IMR-90 (cell line): ENCODE measurements at regions of chr2 and their contacts with region 1.

Region 1: DNA sequence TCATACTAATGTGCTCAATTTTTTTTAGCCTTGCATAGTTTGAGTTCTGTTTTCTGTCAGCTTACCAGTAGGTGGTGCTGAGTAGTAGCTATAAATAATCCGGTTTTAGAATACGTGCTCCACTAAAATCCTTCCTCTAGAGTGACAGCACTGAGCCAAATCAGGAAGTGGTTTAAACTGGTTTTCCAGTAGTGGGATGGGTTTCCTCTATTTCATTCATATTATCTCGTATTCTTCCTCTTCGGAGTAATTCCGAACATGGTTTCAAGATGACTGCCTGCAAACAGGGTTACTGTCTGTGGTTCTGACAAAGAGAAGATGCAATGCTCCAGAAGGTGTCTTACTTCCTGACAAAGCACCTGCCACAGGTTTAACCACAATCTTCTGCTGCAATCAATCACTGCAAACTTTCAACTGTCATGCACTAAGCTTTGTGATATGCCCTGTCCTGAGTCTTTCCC is 496.9 kb upstream of the VRK2 start:
- DNase-seq: no peak
- ATAC-seq: no peak
- H3K4me3 ChIP-seq: no peak overlapping the region
- H3K27ac ChIP-seq: no peak overlapping the region
- H3K4me1 ChIP-seq: no peaks in the 10 kb centered on the region
- H3K27me3 ChIP-seq: no peaks in the 10 kb centered on the region
- CTCF ChIP-seq: 0 out of 2 replicates have a peak, but pooled peaks have one; percentile 9
- POLR2A ChIP-seq: no peak
- RAD21 ChIP-seq: no peak

Region 2: GRCh38 chr2:57701391-57701815 is 151.7 kb after region 1 on chr2:
- CTCF ChIA-PET with region 1: no interaction called
- POLR2A ChIA-PET with region 1: no interaction called
- dilution Hi-C with region 1: no loop called
- in situ Hi-C with region 1: no loop called
- intact Hi-C with region 1: loop called (anchors 1 kb)
- DNase-seq: peak; percentile 0
- ATAC-seq: peak; percentile 75
- H3K4me3 ChIP-seq: no peak overlapping the region
- H3K27ac ChIP-seq: no peak overlapping the region
- H3K4me1 ChIP-seq: no peaks in the 10 kb centered on the region
- H3K27me3 ChIP-seq: no peaks in the 10 kb centered on the region
- CTCF ChIP-seq: no peak
- POLR2A ChIP-seq: no peak
- RAD21 ChIP-seq: no peak

Region 3: DNA sequence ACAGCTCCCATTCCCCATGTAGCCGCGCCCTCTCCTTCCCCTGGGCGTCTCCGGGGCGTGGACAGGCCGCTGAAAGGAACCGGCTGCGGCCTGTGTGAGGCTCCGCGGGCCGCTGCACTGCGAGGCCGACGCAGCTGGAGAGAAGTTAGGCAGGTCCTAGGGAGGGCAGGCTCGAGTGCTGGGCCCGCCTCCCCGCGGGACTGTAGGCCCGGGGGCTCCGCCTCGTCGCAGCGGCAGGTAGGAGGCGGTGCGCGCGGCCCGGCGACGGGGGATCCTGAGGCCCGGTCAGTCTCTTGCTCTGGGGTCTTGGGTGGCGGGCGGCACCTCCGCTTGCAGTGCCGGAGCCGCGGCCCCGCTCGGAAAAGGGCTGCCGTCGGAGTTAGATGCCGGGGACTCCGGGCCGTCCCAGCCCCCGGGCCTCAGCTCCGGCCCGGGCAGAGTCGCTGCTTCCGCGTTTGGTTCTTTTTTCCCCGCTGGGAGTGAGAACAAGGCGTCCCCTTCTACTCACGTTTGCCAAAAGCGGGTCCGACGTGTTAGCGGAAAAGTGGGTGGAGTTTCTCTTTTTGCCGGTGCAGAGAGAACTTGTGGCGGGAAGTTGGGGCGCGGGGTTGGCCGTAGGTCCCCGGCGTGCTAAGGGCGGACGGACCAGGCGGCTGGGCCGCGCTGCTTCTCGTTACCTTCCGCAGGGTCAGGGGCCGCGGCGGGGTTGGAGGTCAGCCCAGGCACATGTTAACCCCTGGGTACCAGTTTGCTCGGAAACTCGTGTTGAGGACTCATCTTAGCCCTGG is 497.1 kb after region 1 on chr2 and contains the start of gene VRK2:
- CTCF ChIA-PET with region 1: no interaction called
- POLR2A ChIA-PET with region 1: no interaction called
- dilution Hi-C with region 1: no loop called
- in situ Hi-C with region 1: no loop called
- intact Hi-C with region 1: no loop called
- DNase-seq: peak; percentile 87
- ATAC-seq: peak; percentile 96
- H3K4me3 ChIP-seq: peak within 1 kb of the TSS; percentile 84
- H3K27ac ChIP-seq: peak within 1 kb of the TSS; percentile 86
- H3K4me1 ChIP-seq: peaks cover 2% of the 10 kb centered on the region; the same call in 1 of the 2 replicates
- H3K27me3 ChIP-seq: no peaks in the 10 kb centered on the region
- CTCF ChIP-seq: no peak
- POLR2A ChIP-seq: peak; percentile 56; the same call in 1 of the 2 replicates
- RAD21 ChIP-seq: peak; percentile 15; the same call in 1 of the 2 replicates
- total RNA-seq, gene VRK2: 22.8 and 27.2 TPM in 2 replicates